Heart right ventricle (tissue), 16 donors: ENCODE measurements at regions of chr13 and their contacts with region 1.

Region 1: GRCh38 chr13:82900453-82900852 is 981.8 kb downstream of the SLITRK1 start:
- DNase-seq: no peak
- ATAC-seq: no peak
- H3K4me3 ChIP-seq: no peak overlapping the region
- H3K27ac ChIP-seq: no peak overlapping the region
- H3K4me1 ChIP-seq: no peaks in the 10 kb centered on the region
- H3K27me3 ChIP-seq: no peaks in the 10 kb centered on the region
- CTCF ChIP-seq: no peak

Region 2: GRCh38 chr13:82058364-82058763 is 842.1 kb before region 1 on chr13:
- intact Hi-C with region 1: loop called in 1 of 10 experiments (anchors 5 kb)
- DNase-seq: no peak
- ATAC-seq: no peak
- H3K4me3 ChIP-seq: no peak overlapping the region
- H3K27ac ChIP-seq: no peak overlapping the region
- H3K4me1 ChIP-seq: no peaks in the 10 kb centered on the region
- H3K27me3 ChIP-seq: no peaks in the 10 kb centered on the region
- CTCF ChIP-seq: no peak

Region 3: GRCh38 chr13:82878536-82878935 is 21.9 kb before region 1 on chr13:
- intact Hi-C with region 1: no loop called
- DNase-seq: no peak
- ATAC-seq: no peak
- H3K4me3 ChIP-seq: no peak overlapping the region
- H3K27ac ChIP-seq: no peak overlapping the region
- H3K4me1 ChIP-seq: no peaks in the 10 kb centered on the region
- H3K27me3 ChIP-seq: no peaks in the 10 kb centered on the region
- CTCF ChIP-seq: no peak